Activated CD4-positive, alpha-beta T cell treated with anti-CD3 and anti-CD28 coated beads, Interleukin-2, amount 10 ng/mL, durations not matched to agents 24 days and 14 days (primary cell): ENCODE measurements at regions of chr3 and their contacts with region 1.

Region 1: GRCh38 chr3:69433969-69434325 is 48.1 kb upstream of the FRMD4B start:
- DNase-seq: no peak
- H3K4me3 Mint-ChIP-seq: no peak overlapping the region
- H3K27ac Mint-ChIP-seq: peak overlapping the region; percentile 76
- H3K4me1 Mint-ChIP-seq: peaks cover 40% of the 10 kb centered on the region
- H3K27me3 Mint-ChIP-seq: peaks cover 3% of the 10 kb centered on the region

Region 2: GRCh38 chr3:69092030-69092516 is 341.9 kb before region 1 on chr3:
- intact Hi-C with region 1: loop called (anchors 2 kb)
- DNase-seq: peak; percentile 81
- H3K4me3 Mint-ChIP-seq: peak overlapping the region; percentile 89
- H3K27ac Mint-ChIP-seq: peak overlapping the region; percentile 97
- H3K4me1 Mint-ChIP-seq: peaks cover 76% of the 10 kb centered on the region
- H3K27me3 Mint-ChIP-seq: no peaks in the 10 kb centered on the region

Region 3: DNA sequence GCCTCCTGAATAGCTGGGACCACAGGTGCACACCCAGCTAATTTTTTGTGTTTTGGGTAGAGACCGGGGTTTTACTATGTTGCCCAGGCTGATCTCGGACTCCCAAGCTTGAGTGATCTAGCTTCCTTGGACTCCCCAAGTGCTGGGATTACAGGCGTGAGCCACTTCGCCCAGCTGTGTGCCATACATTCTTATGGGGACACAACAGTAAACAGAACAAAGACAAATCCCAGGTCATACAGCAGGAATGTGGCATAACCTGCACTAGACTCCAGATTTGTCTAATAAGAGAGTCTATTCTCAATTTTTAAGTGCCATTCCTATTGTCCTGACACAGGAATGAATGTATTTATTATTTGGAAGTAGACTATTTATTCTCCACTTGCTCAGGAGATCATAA is 331.6 kb before region 1 on chr3:
- intact Hi-C with region 1: no loop called
- DNase-seq: no peak
- H3K4me3 Mint-ChIP-seq: no peak overlapping the region
- H3K27ac Mint-ChIP-seq: no peak overlapping the region
- H3K4me1 Mint-ChIP-seq: peaks cover 32% of the 10 kb centered on the region
- H3K27me3 Mint-ChIP-seq: no peaks in the 10 kb centered on the region

Region 4: GRCh38 chr3:69413556-69414207 is 20.3 kb before region 1 on chr3:
- intact Hi-C with region 1: no loop called
- DNase-seq: no peak
- H3K4me3 Mint-ChIP-seq: no peak overlapping the region
- H3K27ac Mint-ChIP-seq: no peak overlapping the region
- H3K4me1 Mint-ChIP-seq: peaks cover 13% of the 10 kb centered on the region
- H3K27me3 Mint-ChIP-seq: peaks cover 8% of the 10 kb centered on the region

Region 5: DNA sequence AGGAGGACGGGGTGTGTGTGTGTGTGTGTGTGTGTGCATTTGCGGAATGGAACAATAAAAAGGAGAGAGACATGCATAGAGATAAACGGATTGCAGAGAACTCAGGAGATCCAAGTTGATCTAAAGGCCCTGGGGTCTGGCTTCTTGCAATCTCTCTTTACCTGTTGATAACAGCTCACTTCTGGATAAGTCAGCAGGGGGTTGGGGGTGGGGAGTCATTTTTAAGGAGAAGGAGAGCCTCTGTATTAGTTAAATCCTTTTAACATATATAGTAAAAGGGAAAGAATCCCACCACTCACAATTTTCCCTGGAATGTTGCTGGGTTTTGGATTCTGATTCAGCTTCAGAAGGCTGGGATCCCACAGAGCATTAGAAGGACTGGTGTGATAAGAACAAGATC is 217.8 kb after region 1 on chr3:
- intact Hi-C with region 1: no loop called
- DNase-seq: no peak
- H3K4me3 Mint-ChIP-seq: no peak overlapping the region
- H3K27ac Mint-ChIP-seq: no peak overlapping the region
- H3K4me1 Mint-ChIP-seq: no peaks in the 10 kb centered on the region
- H3K27me3 Mint-ChIP-seq: no peaks in the 10 kb centered on the region